ENCODE measurements at regions of chr11 and their contacts with region 1.

Region 1: GRCh38 chr11:406978-407739 is 7.6 kb downstream of the SIGIRR start:
- DNase-seq: peak; percentile 89 to 99 (median 94)
- ATAC-seq: peak; percentile 86
- H3K4me3 ChIP-seq: peak overlapping the region in 1 of 2 experiments; percentile 19
- H3K4me3 Mint-ChIP-seq: no peak overlapping the region
- H3K27ac ChIP-seq: peak overlapping the region; percentile 46 to 73
- H3K27ac Mint-ChIP-seq: peak overlapping the region; percentile 82
- H3K4me1 ChIP-seq: peaks cover 25% of the 10 kb centered on the region
- H3K4me1 Mint-ChIP-seq: peaks cover 17% of the 10 kb centered on the region
- H3K27me3 ChIP-seq: no peaks in the 10 kb centered on the region
- H3K27me3 Mint-ChIP-seq: no peaks in the 10 kb centered on the region
- CTCF ChIP-seq: no peak

Region 2: GRCh38 chr11:269146-269890 is 137.8 kb before region 1 on chr11:
- CTCF ChIA-PET with region 1: no interaction called
- POLR2A ChIA-PET with region 1: interaction called, 10 read pairs
- intact Hi-C with region 1: no loop called
- DNase-seq: peak in 5 of 9 experiments; percentile 60 to 90 (median 77)
- ATAC-seq: peak; percentile 69
- H3K4me3 ChIP-seq: peak overlapping the region; percentile 38 to 60
- H3K4me3 Mint-ChIP-seq: peak overlapping the region; percentile 85
- H3K27ac ChIP-seq: peak overlapping the region; percentile 76 to 96
- H3K27ac Mint-ChIP-seq: peak overlapping the region; percentile 98
- H3K4me1 ChIP-seq: peaks cover 23% of the 10 kb centered on the region
- H3K4me1 Mint-ChIP-seq: peaks cover 30% of the 10 kb centered on the region
- H3K27me3 ChIP-seq: no peaks in the 10 kb centered on the region
- H3K27me3 Mint-ChIP-seq: no peaks in the 10 kb centered on the region
- CTCF ChIP-seq: no peak

Region 3: DNA sequence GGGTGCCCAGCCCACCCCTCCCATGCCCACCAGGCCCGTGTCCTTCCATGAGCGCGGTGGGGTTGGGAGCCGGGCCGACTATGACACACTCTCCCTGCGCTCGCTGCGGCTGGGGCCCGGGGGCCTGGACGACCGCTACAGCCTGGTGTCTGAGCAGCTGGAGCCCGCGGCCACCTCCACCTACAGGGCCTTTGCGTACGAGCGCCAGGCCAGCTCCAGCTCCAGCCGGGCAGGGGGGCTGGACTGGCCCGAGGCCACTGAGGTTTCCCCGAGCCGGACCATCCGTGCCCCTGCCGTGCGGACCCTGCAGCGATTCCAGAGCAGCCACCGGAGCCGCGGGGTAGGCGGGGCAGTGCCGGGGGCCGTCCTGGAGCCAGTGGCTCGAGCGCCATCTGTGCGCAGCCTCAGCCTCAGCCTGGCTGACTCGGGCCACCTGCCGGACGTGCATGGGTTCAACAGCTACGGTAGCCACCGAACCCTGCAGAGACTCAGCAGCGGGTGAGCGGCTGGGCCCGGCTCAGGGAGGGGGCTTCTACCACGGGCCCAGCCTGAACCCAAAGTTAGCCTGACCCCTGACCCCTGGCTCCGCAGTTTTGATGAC is 10.1 kb before region 1 on chr11:
- CTCF ChIA-PET with region 1: interaction called, 7 read pairs
- POLR2A ChIA-PET with region 1: interaction called, 12 read pairs
- intact Hi-C with region 1: no loop called
- DNase-seq: peak in 4 of 9 experiments; percentile 58 to 72 (median 66)
- ATAC-seq: peak; percentile 67
- H3K4me3 ChIP-seq: peak overlapping the region; percentile 35 to 42
- H3K4me3 Mint-ChIP-seq: peak overlapping the region; percentile 29
- H3K27ac ChIP-seq: no peak overlapping the region
- H3K27ac Mint-ChIP-seq: no peak overlapping the region
- H3K4me1 ChIP-seq: peaks cover 6% of the 10 kb centered on the region
- H3K4me1 Mint-ChIP-seq: peaks cover 3% of the 10 kb centered on the region
- H3K27me3 ChIP-seq: peaks cover 0 to 3% of the 10 kb centered on the region in 2 experiments
- H3K27me3 Mint-ChIP-seq: peaks cover 3% of the 10 kb centered on the region
- CTCF ChIP-seq: no peak

Region 4: DNA sequence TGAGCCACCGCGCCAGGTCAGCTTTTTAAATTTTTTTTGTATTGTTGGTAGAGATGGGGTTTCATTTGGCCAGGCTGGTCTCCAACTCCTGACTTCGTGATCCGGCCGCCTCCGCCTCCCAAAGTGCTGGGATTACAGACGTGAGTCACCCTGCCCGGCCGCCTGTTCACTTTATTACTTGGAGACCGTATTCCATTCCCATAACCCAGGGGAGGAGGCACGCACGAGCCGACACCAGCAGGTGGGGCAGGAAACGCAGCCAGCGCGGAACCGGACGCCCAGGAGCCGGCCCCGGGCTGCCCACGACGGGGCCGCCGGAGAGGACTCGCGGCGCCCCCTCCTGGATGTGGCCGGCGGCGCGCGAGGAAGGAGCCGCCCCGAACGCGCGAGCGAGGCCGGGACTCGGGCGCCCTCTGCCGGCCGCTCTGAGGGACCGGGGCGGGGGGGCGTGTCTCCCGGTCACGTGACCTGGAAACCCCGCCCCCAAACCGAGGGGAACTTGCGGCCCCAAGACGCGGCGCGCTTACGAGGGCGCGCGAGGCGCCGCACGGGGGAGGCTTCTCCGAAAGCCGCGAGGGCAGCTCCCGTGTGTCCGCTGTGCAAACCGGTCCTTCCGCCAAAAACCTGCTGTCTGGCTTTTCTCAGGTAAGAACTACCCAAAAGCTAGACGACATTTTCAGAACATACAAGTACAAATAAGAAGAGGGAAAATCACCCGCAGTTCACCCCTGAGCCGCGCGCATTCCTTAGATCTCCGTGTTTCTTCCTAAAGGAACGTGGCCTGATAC is 111.5 kb after region 1 on chr11:
- CTCF ChIA-PET with region 1: interaction called, 4 read pairs
- POLR2A ChIA-PET with region 1: no interaction called
- intact Hi-C with region 1: loop called in 1 of 2 experiments (anchors 1 kb)
- DNase-seq: peak; percentile 82 to 98 (median 92)
- ATAC-seq: peak; percentile 95
- H3K4me3 ChIP-seq: peak overlapping the region; percentile 43 to 46
- H3K4me3 Mint-ChIP-seq: peak overlapping the region; percentile 79
- H3K27ac ChIP-seq: peak overlapping the region in 1 of 2 experiments; percentile 59
- H3K27ac Mint-ChIP-seq: peak overlapping the region; percentile 81
- H3K4me1 ChIP-seq: peaks cover 4% of the 10 kb centered on the region
- H3K4me1 Mint-ChIP-seq: peaks cover 5% of the 10 kb centered on the region
- H3K27me3 ChIP-seq: no peaks in the 10 kb centered on the region
- H3K27me3 Mint-ChIP-seq: no peaks in the 10 kb centered on the region
- CTCF ChIP-seq: peak; percentile 99

Region 5: GRCh38 chr11:640021-640706 is 233.0 kb after region 1 on chr11:
- CTCF ChIA-PET with region 1: no interaction called
- POLR2A ChIA-PET with region 1: no interaction called
- intact Hi-C with region 1: no loop called
- DNase-seq: peak in 2 of 9 experiments; percentile 23 to 26
- ATAC-seq: peak; percentile 33
- H3K4me3 ChIP-seq: no peak overlapping the region
- H3K4me3 Mint-ChIP-seq: peak overlapping the region; percentile 63
- H3K27ac ChIP-seq: no peak overlapping the region
- H3K27ac Mint-ChIP-seq: peak overlapping the region; percentile 64
- H3K4me1 ChIP-seq: peaks cover 23% of the 10 kb centered on the region
- H3K4me1 Mint-ChIP-seq: peaks cover 19% of the 10 kb centered on the region
- H3K27me3 ChIP-seq: peaks cover 4 to 25% of the 10 kb centered on the region in 2 experiments
- H3K27me3 Mint-ChIP-seq: peaks cover 23% of the 10 kb centered on the region
- CTCF ChIP-seq: no peak

Measured in CD8-positive, alpha-beta T cell (primary cell).